ENCODE measurements at regions of chr2 and their contacts with region 1.

Region 1: DNA sequence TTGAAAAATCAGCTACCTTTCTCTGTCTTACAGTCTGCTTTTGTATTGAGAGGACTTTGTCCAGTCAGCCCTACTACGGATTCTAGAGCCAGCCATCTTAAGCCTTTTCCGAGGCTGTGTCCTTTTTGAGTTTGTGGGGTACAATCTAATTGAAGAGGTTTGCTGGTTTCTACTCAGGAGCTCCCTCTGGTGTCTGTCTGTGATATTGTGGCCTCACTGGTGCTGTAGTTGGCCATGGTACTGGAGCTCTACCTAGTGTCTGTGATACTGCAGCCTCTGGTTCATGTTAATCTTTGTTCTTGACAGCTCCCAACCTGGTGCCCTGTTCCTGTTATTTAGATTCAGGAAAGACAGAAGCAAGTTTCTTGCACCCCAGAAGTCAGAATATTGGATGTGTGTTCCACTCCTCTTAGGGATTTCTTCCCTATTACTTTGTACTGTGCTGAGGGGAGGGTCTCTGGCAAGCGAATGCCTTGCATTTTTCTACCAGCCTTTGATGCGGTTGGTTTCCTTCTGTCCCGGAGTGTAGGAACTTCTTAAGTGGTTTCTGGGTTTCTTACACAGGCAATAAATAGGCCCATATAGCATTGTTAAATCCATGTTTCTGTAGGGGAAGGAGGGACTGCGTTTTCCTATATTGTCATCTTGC is 78.5 kb downstream of the ACSL3 start:
- DNase-seq: peak; percentile 86
- ATAC-seq: peak; percentile 99
- H3K4me3 Mint-ChIP-seq: no peak overlapping the region
- H3K27ac Mint-ChIP-seq: 0 out of 2 replicates have a peak overlapping the region, but pooled peaks have one; percentile 19
- H3K4me1 Mint-ChIP-seq: peaks cover 12% of the 10 kb centered on the region
- H3K27me3 Mint-ChIP-seq: no peaks in the 10 kb centered on the region
- CTCF ChIP-seq: peak; percentile 54

Region 2: GRCh38 chr2:222690564-222691200 is 248.7 kb before region 1 on chr2:
- CTCF ChIA-PET with region 1: interaction called, 20 read pairs
- POLR2A ChIA-PET with region 1: no interaction called
- DNase-seq: peak; percentile 83
- ATAC-seq: peak; percentile 96
- H3K4me3 Mint-ChIP-seq: no peak overlapping the region
- H3K27ac Mint-ChIP-seq: no peak overlapping the region
- H3K4me1 Mint-ChIP-seq: 0 out of 2 replicates have a peak, but pooled peaks cover 6% of the 10 kb centered on the region
- H3K27me3 Mint-ChIP-seq: no peaks in the 10 kb centered on the region; the same call in 1 of the 2 replicates
- CTCF ChIP-seq: peak; percentile 88

Region 3: DNA sequence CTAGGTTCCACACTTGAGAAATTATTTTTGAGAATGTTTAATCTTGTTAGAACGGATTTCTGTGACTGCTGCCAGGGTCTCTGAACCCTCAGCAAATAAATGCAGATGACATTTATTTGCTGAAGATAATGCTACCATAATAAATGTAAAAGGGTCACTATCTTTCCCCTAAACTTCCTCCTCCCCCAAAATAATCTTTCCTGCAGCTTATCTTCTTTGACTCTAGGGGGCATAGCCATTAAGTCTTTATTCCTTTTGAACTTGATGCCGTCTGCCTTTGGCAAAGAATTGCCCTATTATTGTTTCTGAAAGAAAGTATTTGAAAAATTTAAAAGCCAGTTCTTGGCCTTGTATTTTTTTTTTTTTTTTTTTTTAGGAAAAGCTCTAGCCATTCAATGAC is 142.1 kb before region 1 on chr2:
- CTCF ChIA-PET with region 1: interaction called, 16 read pairs
- POLR2A ChIA-PET with region 1: no interaction called
- DNase-seq: no peak
- ATAC-seq: peak; percentile 37; the same call in 1 of the 2 replicates
- H3K4me3 Mint-ChIP-seq: no peak overlapping the region
- H3K27ac Mint-ChIP-seq: no peak overlapping the region
- H3K4me1 Mint-ChIP-seq: peaks cover 28% of the 10 kb centered on the region
- H3K27me3 Mint-ChIP-seq: no peaks in the 10 kb centered on the region
- CTCF ChIP-seq: no peak

Region 4: DNA sequence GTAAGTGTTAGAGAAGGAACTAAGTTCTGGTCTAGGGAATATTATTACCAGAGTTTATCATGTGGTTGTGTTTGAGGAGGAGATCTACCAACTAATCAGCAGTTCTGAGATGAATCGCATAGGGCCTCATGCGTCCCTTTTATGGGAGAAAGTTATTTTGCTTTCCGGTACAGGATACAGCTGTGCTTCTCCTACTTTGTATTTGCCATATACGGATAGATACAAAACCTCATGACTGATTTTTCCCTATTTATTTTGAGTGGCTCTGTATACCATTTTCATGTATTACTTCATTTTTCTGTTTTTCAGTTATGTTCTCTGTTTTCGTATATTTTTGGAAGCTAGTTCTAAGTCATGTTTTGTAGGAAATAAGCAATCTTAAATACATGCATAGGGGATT is 11.7 kb before region 1 on chr2:
- CTCF ChIA-PET with region 1: interaction called, 11 read pairs
- POLR2A ChIA-PET with region 1: no interaction called
- DNase-seq: no peak
- ATAC-seq: no peak
- H3K4me3 Mint-ChIP-seq: no peak overlapping the region
- H3K27ac Mint-ChIP-seq: no peak overlapping the region; the same call in 1 of the 2 replicates
- H3K4me1 Mint-ChIP-seq: 0 out of 2 replicates have a peak, but pooled peaks cover 6% of the 10 kb centered on the region
- H3K27me3 Mint-ChIP-seq: no peaks in the 10 kb centered on the region
- CTCF ChIP-seq: no peak

Region 5: DNA sequence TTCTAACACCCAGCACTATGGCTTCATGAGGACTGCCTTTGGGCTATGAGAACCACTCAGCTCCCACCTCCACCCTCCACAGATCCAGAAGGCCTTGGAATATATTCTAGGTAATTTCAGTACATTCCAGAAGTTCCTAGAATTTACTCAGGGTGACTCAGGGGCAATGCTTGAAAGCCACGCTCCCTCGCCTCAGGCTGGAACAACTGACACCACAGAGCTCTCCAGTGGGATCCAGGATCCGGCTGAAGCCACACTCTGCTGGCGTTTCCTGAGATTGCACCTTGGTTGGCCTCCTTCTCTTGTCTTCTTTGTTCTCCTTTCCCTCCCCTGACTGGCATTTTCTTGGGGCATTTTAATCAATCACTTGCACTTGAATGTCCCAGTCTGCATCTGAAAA is 20.0 kb after region 1 on chr2:
- CTCF ChIA-PET with region 1: interaction called, 14 read pairs
- POLR2A ChIA-PET with region 1: no interaction called
- DNase-seq: peak; percentile 46
- ATAC-seq: peak; percentile 98
- H3K4me3 Mint-ChIP-seq: no peak overlapping the region
- H3K27ac Mint-ChIP-seq: no peak overlapping the region
- H3K4me1 Mint-ChIP-seq: peaks cover 16% of the 10 kb centered on the region
- H3K27me3 Mint-ChIP-seq: no peaks in the 10 kb centered on the region; the same call in 1 of the 2 replicates
- CTCF ChIP-seq: no peak

Region 6: GRCh38 chr2:223008162-223008561 is 68.8 kb after region 1 on chr2:
- CTCF ChIA-PET with region 1: no interaction called
- POLR2A ChIA-PET with region 1: no interaction called
- DNase-seq: no peak
- ATAC-seq: no peak
- H3K4me3 Mint-ChIP-seq: no peak overlapping the region
- H3K27ac Mint-ChIP-seq: no peak overlapping the region
- H3K4me1 Mint-ChIP-seq: no peaks in the 10 kb centered on the region
- H3K27me3 Mint-ChIP-seq: no peaks in the 10 kb centered on the region
- CTCF ChIP-seq: no peak

Measured in WTC11 (cell line).